ENCODE measurements at regions of chr2 and their contacts with region 1.

Region 1: DNA sequence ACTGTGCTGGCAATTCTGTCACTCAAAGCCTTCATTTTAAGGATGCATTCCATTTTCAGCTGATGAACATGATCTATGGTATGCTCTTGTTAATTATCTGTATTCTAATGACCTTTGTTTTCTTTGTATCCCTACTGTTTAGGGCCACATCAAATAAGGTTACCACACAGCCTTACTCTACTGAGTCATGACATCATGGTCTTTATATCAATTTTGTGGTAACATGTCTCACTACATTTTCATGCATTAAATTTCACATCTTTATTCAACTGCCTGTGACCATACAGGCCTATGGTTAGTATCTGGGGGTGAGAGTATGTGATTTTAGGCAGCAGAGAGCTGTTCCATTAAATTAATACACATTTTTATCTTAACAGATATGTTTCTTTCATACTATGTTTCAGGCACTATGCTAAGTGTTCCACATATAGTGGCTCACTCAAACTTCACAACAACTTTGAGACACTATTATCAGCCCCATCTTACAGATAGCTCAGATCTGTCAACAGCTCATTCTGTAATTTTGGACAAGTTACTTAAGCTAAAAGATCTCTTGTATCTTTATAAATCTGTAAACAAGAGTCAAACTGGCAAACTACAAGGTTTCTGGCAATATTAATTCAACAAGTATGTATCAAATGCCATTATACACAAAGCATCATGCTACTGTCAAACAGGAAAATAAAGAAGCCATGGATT is 18.0 kb downstream of the LRPPRC start:
- DNase-seq: no peak
- H3K4me3 ChIP-seq: no peak overlapping the region
- H3K27ac ChIP-seq: no peak overlapping the region
- H3K4me1 ChIP-seq: no peaks in the 10 kb centered on the region
- H3K27me3 ChIP-seq: no peaks in the 10 kb centered on the region
- CTCF ChIP-seq: no peak
- POLR2A ChIP-seq: no peak

Region 2: DNA sequence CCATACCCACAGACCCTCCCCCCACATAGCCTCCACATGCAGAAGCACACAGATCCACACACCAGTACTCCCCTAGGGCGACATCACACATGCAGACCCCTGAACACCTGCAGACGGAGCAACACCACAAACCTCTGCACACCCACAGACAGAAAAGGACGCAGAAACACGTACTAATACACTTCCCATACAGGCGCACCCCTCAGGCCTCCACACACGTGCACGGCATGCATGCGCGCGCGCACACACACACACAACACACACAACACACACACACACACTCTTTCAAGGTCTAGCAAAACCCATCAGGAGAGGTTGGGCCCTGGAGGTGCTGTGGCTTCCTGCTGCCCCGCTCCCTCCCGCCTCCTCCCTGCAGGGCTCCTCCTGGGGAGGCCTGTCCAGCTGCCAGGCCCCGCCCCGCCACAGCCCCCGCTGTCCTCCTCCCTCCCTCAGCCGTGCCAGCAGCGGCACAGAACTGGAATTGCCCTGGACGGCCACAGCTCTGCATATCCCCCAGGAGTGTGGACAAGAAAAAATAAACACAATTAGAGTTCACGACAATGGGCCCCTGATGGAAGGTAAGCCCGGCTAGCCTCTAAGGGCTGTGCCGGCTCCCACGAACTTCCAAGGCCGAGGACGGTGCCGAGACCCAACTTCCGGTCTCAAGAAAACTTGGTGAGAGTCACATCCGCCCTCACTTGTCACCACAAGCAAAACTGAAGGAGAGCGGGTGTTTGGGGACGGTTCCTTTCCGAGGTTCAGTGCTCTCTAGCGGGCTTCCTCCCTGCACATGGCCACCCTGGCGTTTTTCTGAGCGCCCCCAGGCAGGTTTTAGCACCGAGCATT is 758.2 kb before region 1 on chr2:
- intact Hi-C with region 1: loop called (anchors 5 kb)
- DNase-seq: peak in 1 of 2 donors; percentile 94
- H3K4me3 ChIP-seq: peak overlapping the region; percentile 97 to 99
- H3K27ac ChIP-seq: peak overlapping the region; percentile 99
- H3K4me1 ChIP-seq: peaks cover 45% of the 10 kb centered on the region
- H3K27me3 ChIP-seq: no peaks in the 10 kb centered on the region
- CTCF ChIP-seq: no peak
- POLR2A ChIP-seq: peak in 1 of 2 donors; percentile 5

Measured in vagina (tissue), 2 donors.